ENCODE measurements at regions of chr9 and their contacts with region 1.

Region 1: DNA sequence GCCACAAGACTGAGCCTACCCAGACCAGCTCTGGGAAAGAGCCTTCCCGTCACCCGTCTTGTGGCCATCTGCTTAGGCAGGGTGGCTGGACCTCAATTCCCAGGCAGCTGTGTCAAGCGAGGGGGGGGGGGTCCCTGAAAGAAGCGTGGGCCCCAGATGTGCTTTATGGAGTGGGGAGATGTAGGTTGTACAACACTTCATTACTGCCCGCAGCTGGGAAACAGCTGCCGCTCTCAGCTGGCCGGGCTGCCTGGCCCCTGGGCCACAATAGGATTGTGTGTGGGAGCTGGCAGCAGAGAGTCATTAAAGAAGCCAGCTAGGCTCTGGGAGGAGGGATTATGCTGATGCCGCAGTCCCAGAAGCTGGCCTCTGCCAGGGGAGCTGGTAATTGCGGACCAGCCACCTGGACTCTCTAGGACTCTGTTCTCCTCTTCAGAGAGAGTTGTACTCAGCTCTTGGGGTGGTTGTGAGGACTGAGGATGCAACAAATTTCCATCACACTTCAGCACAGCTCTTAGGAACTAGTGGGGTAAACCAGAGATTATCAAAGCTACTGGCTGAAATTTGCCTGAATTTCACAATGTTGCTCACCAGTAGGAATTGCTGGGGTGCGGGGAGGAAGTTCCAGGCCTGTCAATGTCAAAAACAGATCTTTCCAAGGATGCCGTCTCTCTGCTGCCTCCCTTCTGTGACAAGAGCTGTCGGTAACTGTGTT is 145.5 kb downstream of the GADD45G start:
- DNase-seq: no peak
- H3K4me3 ChIP-seq: no peak overlapping the region
- H3K27ac ChIP-seq: no peak overlapping the region
- H3K4me1 ChIP-seq: no peaks in the 10 kb centered on the region
- H3K27me3 ChIP-seq: peaks cover 76% of the 10 kb centered on the region
- CTCF ChIP-seq: no peak

Region 2: GRCh38 chr9:89802781-89803355 is 52.6 kb after region 1 on chr9:
- CTCF ChIA-PET with region 1: interaction called, 28 read pairs
- POLR2A ChIA-PET with region 1: no interaction called
- intact Hi-C with region 1: no loop called
- DNase-seq: no peak
- H3K4me3 ChIP-seq: no peak overlapping the region
- H3K27ac ChIP-seq: no peak overlapping the region
- H3K4me1 ChIP-seq: no peaks in the 10 kb centered on the region
- H3K27me3 ChIP-seq: peaks cover 80% of the 10 kb centered on the region
- CTCF ChIP-seq: no peak

Region 3: GRCh38 chr9:90201766-90202165 is 451.5 kb after region 1 on chr9:
- CTCF ChIA-PET with region 1: interaction called, 11 read pairs
- POLR2A ChIA-PET with region 1: no interaction called
- intact Hi-C with region 1: no loop called
- DNase-seq: no peak
- H3K4me3 ChIP-seq: no peak overlapping the region
- H3K27ac ChIP-seq: no peak overlapping the region
- H3K4me1 ChIP-seq: no peaks in the 10 kb centered on the region
- H3K27me3 ChIP-seq: peaks cover 59% of the 10 kb centered on the region
- CTCF ChIP-seq: no peak

Measured in PC-9 (cell line).